ENCODE measurements at regions of chr5 and their contacts with region 1.

Region 1: DNA sequence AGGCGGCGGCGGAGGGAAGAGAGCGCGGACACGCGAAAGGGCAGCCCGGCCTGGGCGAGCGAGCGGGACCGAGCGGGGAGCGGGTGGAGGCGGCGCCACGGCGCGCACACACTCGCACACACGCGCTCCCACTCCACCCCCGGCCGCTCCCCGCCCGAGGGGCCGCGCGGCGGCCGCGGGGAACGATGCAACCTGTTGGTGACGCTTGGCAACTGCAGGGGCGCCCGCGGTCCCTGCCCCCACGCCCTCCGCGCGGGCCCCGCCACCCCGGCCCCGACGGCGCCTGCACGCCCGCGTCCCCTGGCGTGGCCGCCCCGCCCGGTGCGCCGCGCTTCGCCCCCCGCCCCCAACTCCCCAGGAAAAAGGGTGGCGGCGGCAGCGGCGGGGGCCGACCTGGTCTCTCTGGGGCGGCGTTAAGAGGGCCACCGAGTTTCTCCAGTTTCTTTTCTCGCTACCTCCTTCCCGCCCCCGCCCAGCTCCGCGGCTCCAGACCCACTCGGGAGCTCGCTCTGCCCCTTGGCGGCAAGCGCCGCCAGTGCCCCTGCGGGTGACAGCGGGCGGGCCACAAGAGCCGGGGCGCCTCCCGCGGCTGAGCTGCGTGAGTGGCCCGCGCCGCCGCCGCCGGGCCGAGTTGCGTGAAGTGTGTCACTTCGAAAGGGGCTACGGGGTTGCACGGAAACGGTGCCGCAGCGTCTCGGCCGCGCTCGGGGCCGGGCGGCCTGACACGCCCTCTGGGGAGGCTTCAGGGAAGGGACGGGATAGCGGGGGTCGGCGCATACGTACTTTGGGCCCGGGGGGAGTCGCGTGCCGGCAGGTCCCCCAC is at the start of gene NR3C1:
- DNase-seq: peak; percentile 88 to 91
- ATAC-seq: peak; percentile 68 to 91 (median 78)
- H3K4me3 ChIP-seq: peak within 1 kb of the TSS; percentile 65 to 97 (median 88)
- H3K27ac ChIP-seq: peak within 1 kb of the TSS; percentile 96 to 100 (median 99)
- H3K4me1 ChIP-seq: peaks cover 0 to 39% (median 18%) of the 10 kb centered on the region in 9 donors
- H3K27me3 ChIP-seq: no peaks in the 10 kb centered on the region
- CTCF ChIP-seq: peak; percentile 50 to 86 (median 63)
- total RNA-seq, gene NR3C1: 31.1 to 62.3 (median 47.6) TPM

Region 2: DNA sequence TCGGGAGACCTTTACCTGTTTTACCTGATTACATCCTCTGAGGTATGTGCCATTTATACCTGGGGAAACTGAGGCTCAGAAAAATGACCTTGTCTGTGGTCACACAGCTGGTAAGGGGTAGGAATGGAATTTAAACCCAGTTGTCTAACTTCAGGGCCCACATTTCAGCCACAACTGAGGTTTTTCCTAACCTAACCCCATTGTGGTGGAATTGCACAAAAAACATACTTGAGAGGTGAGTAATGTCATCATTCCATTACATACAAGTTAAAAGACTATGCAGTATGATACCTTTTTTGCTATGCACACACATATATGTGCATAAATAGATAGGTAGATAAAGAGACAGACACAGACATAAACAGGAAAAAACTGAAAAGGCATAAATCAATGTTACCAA is 732.0 kb before region 1 on chr5:
- intact Hi-C with region 1: no loop called
- DNase-seq: no peak
- ATAC-seq: no peak
- H3K4me3 ChIP-seq: no peak overlapping the region
- H3K27ac ChIP-seq: peak overlapping the region in 3 of 10 donors; percentile 9 to 27 (median 15)
- H3K4me1 ChIP-seq: peaks cover 16 to 71% (median 47%) of the 10 kb centered on the region in 9 donors
- H3K27me3 ChIP-seq: no peaks in the 10 kb centered on the region
- CTCF ChIP-seq: no peak

Region 3: GRCh38 chr5:143008809-143009521 is 394.8 kb before region 1 on chr5:
- intact Hi-C with region 1: loop called in 9 of 10 experiments (anchors 5 to 10 kb)
- DNase-seq: peak in 1 of 2 donors; percentile 32
- ATAC-seq: peak in 6 of 8 donors; percentile 18 to 64 (median 42)
- H3K4me3 ChIP-seq: no peak overlapping the region
- H3K27ac ChIP-seq: peak overlapping the region in 5 of 10 donors; percentile 20 to 77 (median 69)
- H3K4me1 ChIP-seq: peaks cover 7 to 69% (median 57%) of the 10 kb centered on the region in 9 donors
- H3K27me3 ChIP-seq: no peaks in the 10 kb centered on the region
- CTCF ChIP-seq: peak in 1 of 9 donors; percentile 26

Region 4: DNA sequence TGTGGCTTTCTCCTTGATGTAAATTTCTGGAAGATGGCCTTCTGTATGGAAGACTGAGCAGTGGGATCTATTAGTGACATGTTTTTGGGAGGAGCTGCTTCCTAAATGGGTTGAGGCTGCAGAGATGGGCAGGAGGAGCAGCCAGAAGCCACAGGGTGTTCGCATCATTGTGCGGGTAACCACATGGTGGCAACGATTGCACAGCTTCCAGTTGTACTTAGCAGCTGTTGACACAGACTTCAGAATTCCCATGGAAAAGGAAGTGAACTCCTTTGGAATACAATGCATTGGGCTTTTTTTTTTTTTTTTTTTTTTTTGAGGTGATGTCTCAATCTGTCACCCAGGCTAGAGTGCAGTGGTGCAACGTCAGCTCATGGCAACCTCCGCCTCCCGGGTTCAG is 297.6 kb before region 1 on chr5:
- intact Hi-C with region 1: loop called in 6 of 10 experiments (anchors 2 to 5 kb)
- DNase-seq: peak; percentile 20 to 51
- ATAC-seq: peak; percentile 67 to 86 (median 77)
- H3K4me3 ChIP-seq: no peak overlapping the region
- H3K27ac ChIP-seq: peak overlapping the region in 1 of 10 donors; percentile 19
- H3K4me1 ChIP-seq: peaks cover 0 to 77% (median 61%) of the 10 kb centered on the region in 9 donors
- H3K27me3 ChIP-seq: no peaks in the 10 kb centered on the region
- CTCF ChIP-seq: peak in 7 of 9 donors; percentile 27 to 60 (median 35)

Region 5: GRCh38 chr5:143213851-143214363 is 189.9 kb before region 1 on chr5:
- intact Hi-C with region 1: loop called in 6 of 10 experiments (anchors 5 to 10 kb)
- DNase-seq: no peak
- ATAC-seq: peak in 7 of 8 donors; percentile 21 to 77 (median 49)
- H3K4me3 ChIP-seq: no peak overlapping the region
- H3K27ac ChIP-seq: peak overlapping the region in 9 of 10 donors; percentile 9 to 79 (median 66)
- H3K4me1 ChIP-seq: peaks cover 0 to 61% (median 45%) of the 10 kb centered on the region in 9 donors
- H3K27me3 ChIP-seq: no peaks in the 10 kb centered on the region
- CTCF ChIP-seq: no peak

Region 6: GRCh38 chr5:143679777-143680176 is 276.0 kb after region 1 on chr5:
- intact Hi-C with region 1: loop called in 3 of 10 experiments (anchors 5 to 10 kb)
- DNase-seq: no peak
- ATAC-seq: peak in 4 of 8 donors; percentile 22 to 80 (median 63)
- H3K4me3 ChIP-seq: no peak overlapping the region
- H3K27ac ChIP-seq: peak overlapping the region in 1 of 10 donors; percentile 18
- H3K4me1 ChIP-seq: peaks cover 0 to 34% (median 10%) of the 10 kb centered on the region in 9 donors
- H3K27me3 ChIP-seq: no peaks in the 10 kb centered on the region
- CTCF ChIP-seq: no peak

Region 7: DNA sequence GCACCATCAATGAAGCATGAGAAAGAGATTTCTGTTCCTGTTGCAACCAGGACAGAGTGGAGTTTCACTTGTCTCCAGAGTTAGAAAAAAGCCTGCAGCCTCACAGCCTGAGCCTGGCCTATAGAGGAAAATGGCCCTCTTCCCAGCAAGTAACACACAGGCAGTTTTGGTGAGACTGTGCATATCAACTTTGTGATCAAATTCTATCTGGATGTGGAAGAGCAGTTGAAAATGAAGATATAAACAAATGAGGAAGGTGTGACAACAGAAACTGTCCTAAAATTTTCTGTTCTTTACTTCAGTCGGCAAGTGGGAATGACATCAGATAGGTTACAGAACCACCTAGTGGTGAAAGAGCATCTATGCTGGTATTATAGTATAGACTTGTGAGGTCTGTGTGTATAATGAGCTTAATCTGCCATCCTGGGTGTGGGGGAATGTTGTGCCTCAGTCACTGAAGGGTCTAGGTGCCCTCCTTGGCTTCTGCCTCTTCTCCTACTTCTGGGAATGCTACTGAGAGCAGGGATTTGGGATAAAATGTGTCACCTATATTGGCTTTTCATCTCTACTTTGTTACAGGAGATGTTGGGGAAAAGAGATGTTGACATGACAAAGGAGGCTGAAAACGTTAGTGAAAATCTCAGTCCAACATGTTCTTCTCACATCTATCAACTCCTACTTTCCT is 738.5 kb after region 1 on chr5:
- intact Hi-C with region 1: loop called in 1 of 10 experiments (anchors 10 kb)
- DNase-seq: no peak
- ATAC-seq: peak; percentile 22 to 71 (median 64)
- H3K4me3 ChIP-seq: no peak overlapping the region
- H3K27ac ChIP-seq: peak overlapping the region in 1 of 10 donors; percentile 12
- H3K4me1 ChIP-seq: peaks cover 2 to 43% (median 21%) of the 10 kb centered on the region in 9 donors
- H3K27me3 ChIP-seq: no peaks in the 10 kb centered on the region
- CTCF ChIP-seq: peak; percentile 28 to 77 (median 65)